Psoas muscle (tissue), 8 donors: ENCODE measurements at regions of chr5 and their contacts with region 1.

Region 1: DNA sequence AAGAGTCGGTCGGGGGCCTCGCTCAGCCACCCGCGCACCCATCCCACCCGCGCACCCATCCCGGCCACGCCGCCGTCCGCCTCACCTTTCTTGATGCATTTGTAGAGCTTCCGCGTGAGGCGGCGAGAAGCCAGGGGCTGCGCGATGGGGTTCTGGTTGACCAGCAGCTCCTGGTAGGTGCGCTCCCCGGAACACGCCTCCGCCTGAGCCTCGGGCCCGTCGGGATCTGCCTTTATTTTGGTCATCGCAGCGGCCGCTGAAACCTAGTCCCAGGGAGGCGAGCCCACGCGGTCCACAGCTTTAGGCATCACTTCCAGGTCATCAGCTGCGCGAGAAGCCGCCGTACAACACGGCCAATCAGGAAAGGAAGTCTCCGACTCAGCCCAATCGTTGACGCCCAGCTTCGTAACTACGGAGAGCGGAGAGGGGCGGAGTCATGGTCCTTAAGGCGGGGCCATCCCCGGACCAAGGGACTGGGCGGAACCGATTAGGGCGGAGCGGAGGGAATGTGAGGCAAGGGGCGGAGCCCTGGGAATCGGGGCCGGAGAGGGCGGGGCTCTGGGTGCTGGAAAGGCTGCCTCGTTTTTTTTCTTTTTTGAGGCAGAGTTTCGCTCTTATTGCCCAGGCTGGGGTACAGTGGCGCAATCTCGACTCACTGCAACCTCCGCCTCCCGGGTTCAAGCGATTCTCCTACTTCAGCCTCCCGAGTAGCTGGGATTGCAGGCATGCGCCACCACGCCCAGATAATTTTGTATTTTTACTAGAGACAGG is at the start of gene NHP2:
- DNase-seq: peak; percentile 97 to 99
- ATAC-seq: peak; percentile 98 to 99 (median 99)
- H3K4me3 ChIP-seq: peak within 1 kb of the TSS; percentile 96
- H3K27ac ChIP-seq: peak within 1 kb of the TSS; percentile 88
- H3K4me1 ChIP-seq: peaks cover 17% of the 10 kb centered on the region
- H3K27me3 ChIP-seq: no peaks in the 10 kb centered on the region
- CTCF ChIP-seq: no peak
- total RNA-seq, gene NHP2: 86.9 to 131 (median 96.0) TPM

Region 2: GRCh38 chr5:178180141-178180863 is 26.5 kb after region 1 on chr5:
- intact Hi-C with region 1: loop called in 1 of 2 experiments (anchors 1 kb)
- DNase-seq: no peak
- ATAC-seq: no peak
- H3K4me3 ChIP-seq: no peak overlapping the region
- H3K27ac ChIP-seq: no peak overlapping the region
- H3K4me1 ChIP-seq: no peaks in the 10 kb centered on the region
- H3K27me3 ChIP-seq: peaks cover 0 to 2% (median 0%) of the 10 kb centered on the region in 3 donors
- CTCF ChIP-seq: no peak